Activated CD4-positive, alpha-beta T cell treated with anti-CD3 and anti-CD28 coated beads, Interleukin-2, amount 10 ng/mL, durations not matched to agents 24 days and 14 days (primary cell): ENCODE measurements at regions of chr9 and their contacts with region 1.

Region 1: DNA sequence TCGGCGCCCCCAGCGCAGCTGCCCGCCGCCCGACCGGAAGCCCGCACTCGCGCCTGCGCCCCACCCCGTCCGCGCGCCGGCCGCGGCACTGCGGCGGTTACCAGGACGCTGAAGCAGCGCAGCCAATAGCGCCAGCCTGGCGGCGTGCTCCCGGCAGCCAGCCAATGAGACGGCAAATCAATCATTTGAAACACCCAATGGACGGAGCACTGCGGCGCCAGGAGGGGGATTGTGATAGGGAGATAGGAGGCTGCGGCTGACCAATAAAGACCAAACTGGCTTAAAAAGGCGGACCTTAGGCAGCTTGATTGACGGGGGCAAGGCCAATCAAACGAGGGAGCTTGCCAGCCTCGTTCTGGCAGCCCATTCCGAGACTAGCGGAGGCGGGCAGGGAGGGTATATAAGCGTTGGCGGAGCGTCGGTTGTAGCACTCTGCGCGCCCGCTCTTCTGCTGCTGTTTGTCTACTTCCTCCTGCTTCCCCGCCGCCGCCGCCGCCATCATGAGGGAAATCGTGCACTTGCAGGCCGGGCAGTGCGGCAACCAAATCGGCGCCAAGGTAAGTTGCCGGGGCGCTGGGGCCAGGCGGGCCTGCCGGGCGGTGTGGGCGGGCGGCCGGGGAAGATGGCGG is at the start of gene TUBB4B:
- DNase-seq: peak; percentile 99
- H3K4me3 Mint-ChIP-seq: peak within 1 kb of the TSS; percentile 90
- H3K27ac Mint-ChIP-seq: peak within 1 kb of the TSS; percentile 95
- H3K4me1 Mint-ChIP-seq: peaks cover 19% of the 10 kb centered on the region
- H3K27me3 Mint-ChIP-seq: peaks cover 2% of the 10 kb centered on the region
- total RNA-seq, gene TUBB4B: 292 and 299 TPM in 2 replicates

Region 2: DNA sequence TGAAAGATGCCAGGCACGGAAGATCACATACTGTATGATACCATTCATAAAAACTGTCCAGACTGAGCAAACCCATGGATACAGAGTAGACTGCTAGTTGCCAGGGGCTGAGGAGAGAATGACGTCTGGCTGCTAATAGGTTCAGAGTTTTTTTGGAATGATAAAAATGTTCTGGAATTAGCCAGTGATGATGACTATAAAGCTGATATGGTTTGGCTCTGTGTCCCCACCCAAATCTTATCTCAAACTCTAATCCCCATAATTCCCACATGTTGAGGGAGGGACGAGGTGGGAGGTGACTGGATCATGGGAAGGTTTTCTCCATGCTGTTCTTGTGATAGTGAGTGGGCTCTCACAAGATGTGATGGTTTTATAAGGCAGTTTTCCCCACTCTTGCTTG is 1371.1 kb before region 1 on chr9:
- intact Hi-C with region 1: no loop called
- DNase-seq: no peak
- H3K4me3 Mint-ChIP-seq: no peak overlapping the region
- H3K27ac Mint-ChIP-seq: no peak overlapping the region
- H3K4me1 Mint-ChIP-seq: no peaks in the 10 kb centered on the region
- H3K27me3 Mint-ChIP-seq: no peaks in the 10 kb centered on the region

Region 3: DNA sequence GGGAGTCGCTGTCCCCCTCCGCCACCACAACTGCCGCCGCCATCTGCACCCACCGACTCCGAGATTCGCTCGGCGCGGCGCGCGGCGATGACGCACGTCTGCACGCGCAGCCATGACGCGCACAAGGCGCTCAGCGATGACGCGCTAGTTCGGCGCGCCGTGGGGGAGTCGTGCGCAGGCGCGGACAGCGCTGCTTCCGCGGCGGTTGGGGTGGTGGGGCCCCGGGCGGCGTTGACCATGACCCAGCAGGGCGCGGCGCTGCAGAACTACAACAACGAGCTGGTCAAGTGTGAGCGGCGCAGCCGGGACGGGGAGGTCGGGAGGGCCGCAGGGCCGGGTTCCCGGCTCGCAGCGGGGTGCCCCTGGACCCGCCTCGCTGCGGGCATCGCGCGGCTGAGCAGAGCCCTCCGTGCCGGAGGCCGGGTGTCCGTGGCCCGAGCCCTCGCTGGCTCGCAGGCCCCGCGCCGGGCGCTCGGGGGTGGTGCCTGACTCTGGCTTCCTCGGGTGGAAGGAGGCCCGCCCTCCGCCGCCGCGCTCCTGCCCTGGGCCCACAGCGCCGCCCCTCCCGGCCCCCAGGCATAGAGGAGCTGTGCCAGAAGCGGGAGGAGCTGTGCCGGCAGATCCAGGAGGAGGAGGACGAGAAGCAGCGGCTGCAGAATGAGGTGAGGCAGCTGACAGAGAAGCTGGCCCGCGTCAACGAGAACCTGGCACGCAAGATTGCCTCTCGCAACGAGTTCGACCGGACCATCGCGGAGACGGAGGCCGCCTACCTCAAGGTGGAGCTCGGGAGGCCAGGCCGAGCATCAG is 52.3 kb before region 1 on chr9 and contains the starts of genes ANAPC2 and SSNA1:
- intact Hi-C with region 1: loop called (anchors 2 kb)
- DNase-seq: peak; percentile 99
- H3K4me3 Mint-ChIP-seq: peak within 1 kb of the TSS; percentile 91
- H3K27ac Mint-ChIP-seq: peak within 1 kb of the TSS; percentile 94
- H3K4me1 Mint-ChIP-seq: peaks cover 22% of the 10 kb centered on the region
- H3K27me3 Mint-ChIP-seq: no peaks in the 10 kb centered on the region
- total RNA-seq, gene ANAPC2: 57.4 and 58.7 TPM in 2 replicates
- total RNA-seq, gene SSNA1: 95.1 and 95.8 TPM in 2 replicates

Region 4: DNA sequence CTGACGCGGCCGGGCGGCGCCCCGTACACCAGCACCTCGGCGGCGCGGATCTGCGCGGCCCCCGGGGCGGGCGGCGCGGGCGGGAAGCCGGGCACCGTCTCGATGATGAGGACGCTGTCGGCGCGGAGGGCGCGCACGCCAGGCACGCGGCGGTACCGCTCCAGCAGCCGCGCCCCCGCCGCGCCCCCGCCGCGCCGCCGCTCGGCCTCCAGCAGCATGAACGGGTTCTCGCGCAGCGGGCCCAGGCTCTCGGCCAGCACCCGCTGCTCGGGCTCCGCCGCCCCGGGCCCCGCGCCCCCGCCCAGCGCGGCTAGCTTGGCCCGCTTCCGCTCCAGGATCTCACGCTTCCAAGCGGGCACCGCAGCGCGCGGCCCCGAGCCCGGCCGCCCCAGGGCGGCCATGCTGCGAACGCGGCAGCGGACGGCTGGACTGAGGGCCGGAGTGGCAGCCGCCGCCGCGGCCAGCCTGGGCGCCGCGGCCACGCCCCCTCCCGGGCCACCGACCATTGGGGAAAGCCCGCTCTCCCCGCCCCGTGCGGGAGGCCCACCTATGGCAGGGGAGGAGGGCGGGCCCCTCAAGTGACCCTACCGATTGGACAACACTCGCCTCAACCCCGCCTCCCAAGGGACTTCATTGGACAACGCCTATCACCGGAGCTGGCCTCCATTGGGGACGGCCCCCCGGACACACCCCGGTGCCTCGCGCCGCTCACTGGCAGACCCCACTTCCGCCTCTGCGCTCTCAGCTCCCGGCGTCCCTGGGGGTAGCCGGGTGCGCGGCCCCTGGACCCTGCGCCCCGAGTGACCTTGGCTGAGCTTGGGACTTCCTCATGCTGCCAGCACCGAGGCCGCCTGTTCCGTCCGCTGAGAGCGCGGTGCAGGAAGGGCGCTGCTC is 40.4 kb before region 1 on chr9 and contains the start of gene TPRN:
- intact Hi-C with region 1: loop called (anchors 5 kb)
- DNase-seq: peak; percentile 100
- H3K4me3 Mint-ChIP-seq: peak within 1 kb of the TSS; percentile 87
- H3K27ac Mint-ChIP-seq: peak within 1 kb of the TSS; percentile 65
- H3K4me1 Mint-ChIP-seq: peaks cover 14% of the 10 kb centered on the region
- H3K27me3 Mint-ChIP-seq: peaks cover 2% of the 10 kb centered on the region
- total RNA-seq, gene TPRN: 15.1 and 16.3 TPM in 2 replicates

Region 5: DNA sequence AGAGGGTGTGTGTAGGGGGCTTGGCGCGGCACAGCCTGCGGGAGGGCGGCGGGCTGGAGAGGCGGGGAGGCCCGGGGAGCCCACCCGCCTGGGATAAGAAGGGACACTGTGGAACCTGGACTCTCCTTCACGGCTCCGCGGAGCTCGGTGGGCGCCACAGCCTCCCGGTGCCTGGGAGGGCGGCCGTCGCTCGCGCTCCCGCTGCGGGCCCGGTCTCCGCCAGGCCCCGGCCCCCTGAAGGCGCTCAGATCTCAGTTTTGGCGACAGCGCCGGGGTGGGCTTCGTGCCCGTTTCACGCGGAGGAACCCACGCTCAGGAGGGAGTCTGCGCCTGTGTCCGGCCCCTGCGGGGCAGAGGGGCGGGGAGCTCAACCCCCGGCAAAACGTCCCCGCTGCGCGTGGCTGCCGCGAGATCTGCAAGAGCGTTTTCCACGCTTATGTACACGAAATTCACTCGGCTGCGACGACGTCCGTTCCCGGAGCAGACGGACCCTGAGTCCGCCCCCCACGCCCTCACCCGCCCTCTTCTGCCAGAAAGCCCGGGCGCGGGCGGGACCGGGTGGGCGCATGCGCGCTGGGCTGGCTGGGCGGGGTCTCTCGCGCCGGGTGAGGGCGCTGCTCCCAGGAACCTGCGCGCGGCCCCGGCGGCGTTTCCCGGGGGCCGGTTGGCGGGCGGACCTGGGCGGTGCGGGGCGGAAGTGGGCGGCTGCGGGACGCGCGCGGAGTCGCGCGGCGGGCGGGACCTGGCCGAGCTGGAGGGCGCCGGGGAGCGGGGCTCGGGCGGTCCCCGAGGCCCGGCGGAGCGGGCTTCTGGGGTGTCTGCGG is 13.9 kb after region 1 on chr9 and contains the start of gene NELFB:
- intact Hi-C with region 1: loop called (anchors 1 kb)
- DNase-seq: peak; percentile 100
- H3K4me3 Mint-ChIP-seq: peak within 1 kb of the TSS; percentile 90
- H3K27ac Mint-ChIP-seq: peak within 1 kb of the TSS; percentile 84
- H3K4me1 Mint-ChIP-seq: peaks cover 13% of the 10 kb centered on the region
- H3K27me3 Mint-ChIP-seq: peaks cover 1% of the 10 kb centered on the region
- total RNA-seq, gene NELFB: 72.4 and 75.3 TPM in 2 replicates